ENCODE measurements at regions of chr2 and their contacts with region 1.

Region 1: GRCh38 chr2:230614913-230615332 is 97.7 kb upstream of the CAB39 start:
- DNase-seq: no peak

Region 2: GRCh38 chr2:230184727-230185578 is 430.0 kb before region 1 on chr2:
- intact Hi-C with region 1: loop called in 1 of 2 experiments (anchors 10 kb)
- DNase-seq: no peak

Region 3: DNA sequence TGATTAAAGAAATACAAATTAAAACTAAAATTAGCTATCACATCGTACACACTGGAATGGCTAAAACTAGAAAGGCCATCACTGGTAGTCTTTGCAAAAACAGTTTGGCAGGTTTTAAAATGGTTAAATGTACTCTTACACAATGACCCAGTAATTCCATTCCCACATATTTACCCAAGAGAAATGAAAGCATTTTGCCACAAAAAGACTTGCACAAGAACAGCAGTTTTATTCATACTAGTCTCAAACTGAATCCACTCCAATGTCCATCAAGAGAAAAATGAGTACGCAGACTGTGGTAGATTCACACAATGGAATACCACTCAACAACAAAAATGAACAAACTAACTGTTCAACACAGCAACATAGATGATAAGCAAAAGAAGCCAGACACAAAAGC is 258.8 kb before region 1 on chr2:
- intact Hi-C with region 1: no loop called
- DNase-seq: no peak

Region 4: DNA sequence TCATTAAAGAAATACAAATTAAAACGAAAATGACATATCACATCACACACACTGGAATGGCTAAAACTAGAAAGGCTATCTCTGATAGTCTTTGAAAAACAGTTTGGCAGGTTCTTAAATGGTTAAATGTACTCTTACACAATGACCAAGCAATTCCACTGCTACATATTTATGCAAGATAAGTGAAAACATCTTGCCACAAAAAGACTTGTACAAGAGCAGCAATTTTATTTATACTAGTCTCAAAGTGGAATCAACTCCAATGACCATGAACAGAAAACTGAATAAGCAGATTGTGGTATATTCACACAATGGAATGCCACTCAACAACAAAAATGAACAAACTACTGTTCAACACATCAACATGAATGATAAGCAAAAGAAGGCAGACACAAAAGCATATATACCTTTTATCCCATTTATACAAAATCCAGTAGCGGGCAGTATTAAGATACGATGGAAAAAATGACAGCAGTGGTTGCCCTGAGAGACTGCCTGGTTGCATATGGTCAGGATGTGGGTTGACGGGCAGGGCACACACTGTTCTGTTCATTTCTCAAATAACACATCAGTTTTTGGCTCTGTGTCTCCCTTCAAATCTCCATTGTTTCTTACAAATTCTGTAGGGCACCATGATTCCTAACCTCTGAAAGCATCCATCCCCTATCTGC is 173.6 kb before region 1 on chr2:
- intact Hi-C with region 1: no loop called
- DNase-seq: no peak